Activated CD8-positive, alpha-beta memory T cell treated with anti-CD3 and anti-CD28 coated beads, Interleukin-2, amount 10 ng/mL, durations not matched to agents 7 days and 5 days (primary cell): ENCODE measurements at regions of chr11 and their contacts with region 1.

Region 1: GRCh38 chr11:65506770-65507505 is 8.1 kb downstream of the MALAT1 start:
- DNase-seq: peak; percentile 58
- ATAC-seq: peak; percentile 37
- H3K4me3 Mint-ChIP-seq: no peak overlapping the region
- H3K27ac Mint-ChIP-seq: no peak overlapping the region
- H3K4me1 Mint-ChIP-seq: peaks cover 50% of the 10 kb centered on the region
- H3K27me3 Mint-ChIP-seq: no peaks in the 10 kb centered on the region

Region 2: GRCh38 chr11:65172600-65172999 is 334.3 kb before region 1 on chr11:
- CTCF ChIA-PET with region 1: no interaction called
- DNase-seq: no peak
- ATAC-seq: no peak
- H3K4me3 Mint-ChIP-seq: no peak overlapping the region
- H3K27ac Mint-ChIP-seq: no peak overlapping the region
- H3K4me1 Mint-ChIP-seq: peaks cover 11% of the 10 kb centered on the region
- H3K27me3 Mint-ChIP-seq: no peaks in the 10 kb centered on the region

Region 3: GRCh38 chr11:65366340-65366773 is 140.6 kb before region 1 on chr11:
- CTCF ChIA-PET with region 1: interaction called, 27 read pairs
- DNase-seq: no peak
- ATAC-seq: peak; percentile 78
- H3K4me3 Mint-ChIP-seq: no peak overlapping the region
- H3K27ac Mint-ChIP-seq: no peak overlapping the region
- H3K4me1 Mint-ChIP-seq: peaks cover 14% of the 10 kb centered on the region
- H3K27me3 Mint-ChIP-seq: no peaks in the 10 kb centered on the region

Region 4: DNA sequence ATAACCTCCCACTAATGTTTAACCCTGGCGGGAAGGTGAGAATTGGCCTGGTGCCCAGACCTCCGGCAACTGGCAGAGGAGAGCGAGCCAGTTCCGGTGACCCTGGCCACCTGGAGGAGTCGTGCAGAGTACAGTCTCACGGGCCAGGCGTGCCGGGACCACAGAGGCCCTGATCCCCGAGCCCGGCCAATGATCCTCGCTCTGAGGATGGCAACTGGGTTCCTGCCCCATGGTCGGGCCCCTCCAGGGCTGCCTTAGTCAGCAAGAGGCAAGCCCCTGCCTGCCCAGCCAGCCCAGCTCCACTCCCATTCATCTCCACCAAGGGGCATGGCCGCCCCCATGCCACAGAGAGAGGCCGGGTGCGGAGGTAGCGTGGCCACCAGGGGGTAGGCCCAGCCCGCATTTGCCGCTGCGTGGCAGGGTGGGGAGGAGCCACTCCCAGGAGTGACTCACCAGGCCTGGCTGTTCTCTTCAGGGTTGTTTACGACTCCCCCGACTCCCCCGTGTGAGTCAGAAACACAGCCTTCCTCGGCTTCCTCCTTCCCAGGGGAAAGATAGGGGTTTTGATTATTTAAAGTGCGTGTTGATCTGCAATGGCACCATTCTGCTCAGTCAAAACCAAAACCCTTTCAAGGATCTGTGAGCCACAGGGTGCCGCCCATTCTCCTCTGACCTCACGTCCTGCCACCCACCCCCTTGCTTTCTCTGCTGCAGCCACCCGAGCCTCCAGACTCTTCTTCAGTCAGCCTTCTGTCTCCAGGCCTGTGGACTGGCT is 124.7 kb before region 1 on chr11 and contains the start of gene SLC25A45:
- CTCF ChIA-PET with region 1: interaction called, 24 read pairs
- DNase-seq: peak; percentile 94
- ATAC-seq: peak; percentile 84
- H3K4me3 Mint-ChIP-seq: peak within 1 kb of the TSS; percentile 80
- H3K27ac Mint-ChIP-seq: peak within 1 kb of the TSS; percentile 98
- H3K4me1 Mint-ChIP-seq: peaks cover 51% of the 10 kb centered on the region
- H3K27me3 Mint-ChIP-seq: no peaks in the 10 kb centered on the region
- total RNA-seq, gene SLC25A45: 19.4 to 25.1 TPM

Region 5: GRCh38 chr11:65471410-65471762 is 35.6 kb before region 1 on chr11:
- CTCF ChIA-PET with region 1: interaction called, 38 read pairs
- DNase-seq: no peak
- ATAC-seq: peak; percentile 2
- H3K4me3 Mint-ChIP-seq: no peak overlapping the region
- H3K27ac Mint-ChIP-seq: peak overlapping the region; percentile 91
- H3K4me1 Mint-ChIP-seq: peaks cover 31% of the 10 kb centered on the region
- H3K27me3 Mint-ChIP-seq: no peaks in the 10 kb centered on the region

Region 6: DNA sequence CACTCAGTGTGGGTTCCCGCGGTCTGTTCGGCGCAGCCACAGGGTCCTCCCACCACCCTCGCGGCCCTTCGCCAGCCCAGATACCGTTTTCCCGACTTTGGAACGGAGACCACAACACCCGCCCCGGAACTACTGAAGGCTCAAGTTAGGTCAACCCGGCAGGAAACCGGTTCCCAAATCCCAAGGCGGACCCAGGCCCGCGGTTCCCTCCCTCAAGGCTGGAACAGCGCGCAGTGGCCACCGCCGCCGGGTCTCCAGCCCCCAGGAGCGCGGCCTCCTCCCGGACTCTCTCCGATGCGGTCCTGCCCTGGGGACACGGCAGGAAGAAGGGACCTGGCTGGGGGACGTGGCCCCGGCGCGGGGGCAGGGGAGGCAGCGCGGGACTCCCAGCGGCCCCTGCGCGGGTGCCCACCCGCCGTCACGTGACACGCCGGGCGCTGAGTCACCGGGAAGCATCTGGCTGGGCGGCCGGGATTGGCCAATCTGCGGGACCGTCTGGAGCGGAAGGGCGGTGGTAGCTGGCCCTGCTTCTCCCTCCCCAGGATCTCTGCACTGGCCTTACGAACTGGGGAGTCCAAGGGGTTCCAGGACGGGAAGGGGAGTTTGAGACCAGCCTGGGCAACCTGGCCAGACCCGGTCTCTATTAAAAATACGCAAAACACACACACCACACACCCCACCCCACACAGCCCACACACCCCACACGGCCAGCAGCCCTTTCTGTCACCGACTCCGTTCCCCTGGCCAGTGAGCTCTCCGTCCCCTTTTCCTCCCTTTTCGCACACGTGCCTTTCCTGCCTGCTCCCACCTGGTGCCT is 29.6 kb before region 1 on chr11:
- CTCF ChIA-PET with region 1: interaction called, 38 read pairs
- DNase-seq: peak; percentile 94
- ATAC-seq: peak; percentile 90
- H3K4me3 Mint-ChIP-seq: peak overlapping the region; percentile 83
- H3K27ac Mint-ChIP-seq: peak overlapping the region; percentile 95
- H3K4me1 Mint-ChIP-seq: peaks cover 20% of the 10 kb centered on the region
- H3K27me3 Mint-ChIP-seq: peaks cover 2% of the 10 kb centered on the region